ACHN (cell line): ENCODE measurements at regions of chr10 and their contacts with region 1.

Region 1: GRCh38 chr10:91247360-91248111 is 27.1 kb downstream of the PCGF5 start:
- DNase-seq: no peak

Region 2: DNA sequence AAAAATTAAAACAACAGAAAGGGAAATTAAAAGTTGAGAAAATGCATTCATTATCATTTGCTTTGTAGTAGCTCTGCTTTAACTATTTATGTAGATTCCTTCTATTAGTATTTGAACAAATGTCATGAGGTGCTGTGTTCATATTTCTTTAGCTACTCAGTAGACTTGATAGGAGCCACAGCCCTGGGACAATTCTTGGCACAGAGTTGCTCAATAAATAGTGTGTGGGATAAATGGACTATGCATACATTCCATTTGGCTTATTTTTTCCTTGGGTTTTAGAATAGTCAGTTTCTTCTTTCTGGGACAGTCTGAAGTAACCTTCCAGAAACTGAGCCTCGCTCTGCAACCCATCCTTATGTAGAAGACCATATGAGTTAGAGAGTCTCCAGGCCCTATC is 362.4 kb before region 1 on chr10:
- in situ Hi-C with region 1: loop called (anchors 25 kb)
- DNase-seq: no peak

Region 3: DNA sequence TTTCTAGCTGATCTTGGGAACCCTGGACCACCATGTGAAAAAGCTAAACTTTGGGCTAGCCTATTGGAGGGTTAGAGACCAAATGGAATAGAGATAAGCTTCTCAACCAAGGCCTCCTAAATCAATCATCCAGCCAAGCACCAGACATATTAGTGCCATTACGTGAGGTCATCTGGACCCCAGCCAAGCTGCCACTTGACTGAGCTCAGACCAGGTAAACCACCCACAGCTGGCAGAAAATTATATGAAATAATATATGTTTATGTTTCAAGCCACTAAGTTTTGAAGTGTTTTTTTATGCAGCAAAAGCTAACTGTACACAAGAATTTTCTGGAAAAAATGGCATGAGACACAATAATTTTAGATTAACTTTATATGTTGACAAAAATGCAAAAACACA is 109.7 kb before region 1 on chr10:
- in situ Hi-C with region 1: no loop called
- DNase-seq: no peak